Panc1 (cell line): ENCODE measurements at regions of chr10 and their contacts with region 1.

Region 1: DNA sequence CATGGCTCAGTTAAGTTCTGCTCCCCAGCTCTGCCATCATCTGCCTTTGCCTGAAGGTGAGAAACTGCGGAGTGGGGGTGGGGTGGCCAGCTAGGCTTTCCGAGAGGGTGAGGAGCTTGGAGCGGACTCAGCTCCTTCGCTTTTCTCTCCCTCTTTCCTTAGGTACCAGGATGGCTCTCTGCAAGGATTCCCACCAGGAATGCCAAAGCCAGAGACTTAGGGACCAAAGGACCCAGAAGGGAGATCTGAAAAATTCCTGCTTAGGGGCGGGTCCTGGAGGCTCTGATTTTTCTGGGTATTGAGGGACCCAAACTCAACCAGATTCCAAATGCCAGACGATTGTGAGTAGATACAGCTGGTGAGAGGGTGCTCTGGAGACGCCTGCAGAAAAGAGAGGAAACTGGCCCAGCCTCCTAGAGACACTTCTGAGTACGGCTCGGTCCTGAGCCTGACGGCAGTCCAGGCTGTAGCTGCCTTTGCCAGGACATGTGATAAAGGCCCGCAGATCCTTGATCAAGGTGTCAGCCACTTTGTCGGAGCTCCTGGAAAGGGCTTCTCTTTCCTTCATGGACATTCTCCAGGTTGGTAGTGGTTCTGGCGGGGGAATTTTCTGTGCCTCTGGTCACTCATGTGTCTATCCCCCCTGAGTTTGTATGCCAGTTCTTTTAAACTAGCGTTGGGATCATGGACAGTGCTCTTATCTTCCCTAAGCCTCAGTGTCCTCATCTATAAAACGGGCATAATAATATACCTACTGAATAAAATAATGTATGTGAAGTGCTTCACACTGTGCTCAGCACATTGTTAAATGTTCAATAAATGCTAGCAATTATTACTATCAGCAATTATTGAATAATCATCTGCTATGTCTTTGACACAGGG is 42.5 kb upstream of the BTRC start:
- DNase-seq: no peak
- ATAC-seq: peak; percentile 60
- H3K4me3 ChIP-seq: peak overlapping the region in 1 of 2 experiments; percentile 10; a peak in 1 of 4 replicates
- H3K27ac ChIP-seq: no peak overlapping the region
- H3K4me1 ChIP-seq: peaks cover 5% of the 10 kb centered on the region
- H3K27me3 ChIP-seq: peaks cover 18% of the 10 kb centered on the region
- CTCF ChIP-seq: no peak

Region 2: DNA sequence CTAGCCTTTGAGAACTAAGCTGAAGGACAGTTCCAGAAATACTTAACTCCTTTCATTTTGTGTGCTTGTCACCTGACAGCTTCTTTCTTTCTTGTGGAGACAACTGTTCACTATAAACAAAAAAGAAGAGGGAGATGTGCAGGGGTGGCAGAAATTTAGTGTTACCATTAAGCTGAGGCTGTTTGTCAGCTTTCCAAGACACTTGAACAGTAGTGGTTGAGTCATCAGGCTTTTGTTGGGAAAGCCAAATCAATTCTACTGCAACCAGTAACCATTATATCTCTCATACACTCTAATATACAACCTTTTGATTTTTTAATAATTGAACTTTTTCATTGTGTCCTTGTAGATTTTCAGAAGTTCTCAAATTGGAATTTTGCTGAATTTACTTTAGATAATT is 201.3 kb after region 1 on chr10:
- CTCF ChIA-PET with region 1: no interaction called
- POLR2A ChIA-PET with region 1: interaction called, 10 read pairs
- in situ Hi-C with region 1: no loop called
- intact Hi-C with region 1: no loop called
- DNase-seq: no peak
- ATAC-seq: no peak
- H3K4me3 ChIP-seq: no peak overlapping the region
- H3K27ac ChIP-seq: no peak overlapping the region
- H3K4me1 ChIP-seq: no peaks in the 10 kb centered on the region
- H3K27me3 ChIP-seq: no peaks in the 10 kb centered on the region
- CTCF ChIP-seq: no peak